ENCODE measurements at regions of chrX and their contacts with region 1.

Region 1: DNA sequence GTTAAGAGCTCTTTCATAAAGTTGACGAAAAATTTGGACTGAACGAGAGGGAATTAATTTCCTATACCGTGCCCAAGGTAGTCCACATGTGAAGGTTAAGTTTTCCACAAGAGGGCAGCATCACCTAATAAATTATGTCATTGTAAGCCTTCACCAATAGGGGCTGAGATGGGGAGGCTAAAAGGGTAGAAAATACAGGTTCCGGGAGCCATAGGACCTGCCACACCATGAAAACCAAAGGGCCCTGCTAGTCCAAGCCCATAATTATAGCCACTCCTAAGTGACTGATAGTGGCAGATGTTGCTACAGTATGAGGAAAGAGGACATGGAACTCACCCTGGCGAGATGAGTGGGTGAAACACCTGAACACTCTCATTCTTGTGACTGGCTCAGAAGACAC is 122.2 kb downstream of the SHROOM4 start:
- DNase-seq: peak; percentile 48
- ATAC-seq: peak; percentile 86
- H3K4me3 ChIP-seq: no peak overlapping the region
- H3K27ac ChIP-seq: no peak overlapping the region
- H3K4me1 ChIP-seq: no peaks in the 10 kb centered on the region
- H3K27me3 ChIP-seq: no peaks in the 10 kb centered on the region
- CTCF ChIP-seq: peak; percentile 72
- POLR2A ChIP-seq: no peak
- RAD21 ChIP-seq: peak; percentile 68

Region 2: DNA sequence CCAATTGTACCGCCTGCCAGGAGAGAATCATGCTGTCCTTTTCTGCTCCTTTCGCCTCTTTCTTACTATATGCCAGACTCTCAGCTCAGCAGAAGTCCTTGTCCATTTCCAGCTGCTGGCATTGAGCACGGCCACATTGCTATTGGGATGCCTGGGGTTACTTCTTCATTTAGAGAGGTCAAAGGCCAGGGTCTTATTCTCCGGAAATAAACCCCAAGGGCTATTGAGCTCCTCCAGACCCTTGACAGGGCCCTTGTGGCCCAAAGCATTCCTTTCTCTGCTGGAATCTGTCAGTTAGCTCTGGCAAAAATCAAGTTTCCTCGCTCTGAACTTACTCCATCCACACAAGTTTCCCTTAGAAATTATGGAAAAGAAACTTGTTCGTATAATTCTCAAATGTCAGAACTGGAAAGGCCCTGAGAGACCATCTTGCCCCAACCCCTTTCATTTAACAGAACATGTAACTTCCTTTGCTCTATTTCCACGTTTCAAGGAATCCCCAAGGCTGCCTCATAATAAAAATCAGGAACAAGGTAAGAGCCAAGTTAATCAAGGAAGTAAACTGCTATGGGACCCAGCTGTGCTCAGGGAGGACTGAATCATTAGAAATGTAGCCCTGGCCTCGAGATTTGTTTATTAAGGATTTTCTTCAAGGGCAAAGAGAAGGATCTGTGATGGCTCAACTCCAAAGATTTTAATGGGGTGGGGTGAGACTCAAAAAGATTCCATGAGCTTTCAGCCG is 502.8 kb before region 1 on chrX:
- CTCF ChIA-PET with region 1: no interaction called
- POLR2A ChIA-PET with region 1: no interaction called
- dilution Hi-C with region 1: no loop called
- in situ Hi-C with region 1: no loop called
- intact Hi-C with region 1: no loop called
- DNase-seq: no peak
- ATAC-seq: no peak
- H3K4me3 ChIP-seq: no peak overlapping the region
- H3K27ac ChIP-seq: no peak overlapping the region
- H3K4me1 ChIP-seq: no peaks in the 10 kb centered on the region
- H3K27me3 ChIP-seq: peaks cover 10% of the 10 kb centered on the region
- CTCF ChIP-seq: no peak
- POLR2A ChIP-seq: no peak
- RAD21 ChIP-seq: no peak

Region 3: DNA sequence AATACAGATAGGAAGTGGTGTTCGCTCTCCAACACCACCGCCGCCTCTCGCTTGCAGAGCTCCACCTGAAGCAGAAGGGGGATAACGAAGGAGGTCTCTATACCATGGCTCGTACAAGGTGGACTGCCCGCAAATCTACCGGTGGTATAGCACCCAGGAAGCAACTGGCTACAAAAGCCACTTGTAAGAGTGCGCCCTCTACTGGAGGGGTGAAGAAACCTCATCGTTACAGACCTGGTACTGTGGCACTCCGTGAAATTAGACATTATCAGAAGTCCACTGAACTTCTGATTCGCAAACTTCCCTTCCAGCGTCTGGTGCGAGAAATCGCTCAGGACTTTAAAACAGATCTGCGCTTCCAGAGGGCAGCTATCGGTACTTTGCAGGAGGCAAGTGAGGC is 213.5 kb after region 1 on chrX:
- CTCF ChIA-PET with region 1: interaction called, 6 read pairs
- POLR2A ChIA-PET with region 1: no interaction called
- dilution Hi-C with region 1: no loop called
- in situ Hi-C with region 1: loop called (anchors 10 kb)
- intact Hi-C with region 1: loop called (anchors 1 kb)
- DNase-seq: no peak
- ATAC-seq: no peak
- H3K4me3 ChIP-seq: no peak overlapping the region
- H3K27ac ChIP-seq: no peak overlapping the region
- H3K4me1 ChIP-seq: no peaks in the 10 kb centered on the region
- H3K27me3 ChIP-seq: peaks cover 8% of the 10 kb centered on the region
- CTCF ChIP-seq: no peak
- POLR2A ChIP-seq: no peak
- RAD21 ChIP-seq: no peak

Region 4: DNA sequence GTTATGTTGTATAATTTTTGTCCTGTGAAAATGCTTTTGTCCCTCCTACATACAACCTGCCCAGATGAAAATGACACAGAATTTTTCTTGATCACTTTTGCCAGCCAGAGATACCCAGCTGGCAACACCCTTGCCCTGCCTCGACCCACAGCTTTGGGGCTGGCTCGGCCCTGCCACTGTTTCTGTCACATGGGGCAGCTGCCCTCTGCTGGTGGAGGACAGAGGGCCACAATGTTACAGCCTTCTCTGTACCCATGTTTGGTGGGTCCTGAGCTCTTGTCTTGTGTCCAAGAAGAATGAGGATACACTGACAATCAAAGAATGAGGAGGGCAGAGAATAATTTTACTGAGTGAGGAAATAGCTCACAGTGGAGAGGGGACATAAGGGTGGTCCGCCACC is 249.8 kb after region 1 on chrX:
- CTCF ChIA-PET with region 1: interaction called, 3 read pairs
- POLR2A ChIA-PET with region 1: no interaction called
- dilution Hi-C with region 1: no loop called
- in situ Hi-C with region 1: no loop called
- intact Hi-C with region 1: loop called (anchors 5 kb)
- DNase-seq: no peak
- ATAC-seq: no peak
- H3K4me3 ChIP-seq: no peak overlapping the region
- H3K27ac ChIP-seq: no peak overlapping the region
- H3K4me1 ChIP-seq: no peaks in the 10 kb centered on the region
- H3K27me3 ChIP-seq: no peaks in the 10 kb centered on the region; the same call in none of the 2 replicates
- CTCF ChIP-seq: peak; percentile 29
- POLR2A ChIP-seq: no peak
- RAD21 ChIP-seq: no peak

Region 5: GRCh38 chrX:51420610-51421009 is 728.8 kb after region 1 on chrX:
- CTCF ChIA-PET with region 1: no interaction called
- POLR2A ChIA-PET with region 1: no interaction called
- dilution Hi-C with region 1: no loop called
- in situ Hi-C with region 1: no loop called
- intact Hi-C with region 1: loop called (anchors 5 kb)
- DNase-seq: peak; percentile 45
- ATAC-seq: peak; percentile 46; the same call in 1 of the 2 replicates
- H3K4me3 ChIP-seq: no peak overlapping the region
- H3K27ac ChIP-seq: no peak overlapping the region
- H3K4me1 ChIP-seq: no peaks in the 10 kb centered on the region
- H3K27me3 ChIP-seq: peaks cover 3% of the 10 kb centered on the region; the same call in 1 of the 2 replicates
- CTCF ChIP-seq: peak; percentile 65
- POLR2A ChIP-seq: no peak
- RAD21 ChIP-seq: peak; percentile 41; the same call in 1 of the 2 replicates

Measured in IMR-90 (cell line).